Prostate gland (tissue), 2 donors: ENCODE measurements at regions of chr6 and their contacts with region 1.

Region 1: DNA sequence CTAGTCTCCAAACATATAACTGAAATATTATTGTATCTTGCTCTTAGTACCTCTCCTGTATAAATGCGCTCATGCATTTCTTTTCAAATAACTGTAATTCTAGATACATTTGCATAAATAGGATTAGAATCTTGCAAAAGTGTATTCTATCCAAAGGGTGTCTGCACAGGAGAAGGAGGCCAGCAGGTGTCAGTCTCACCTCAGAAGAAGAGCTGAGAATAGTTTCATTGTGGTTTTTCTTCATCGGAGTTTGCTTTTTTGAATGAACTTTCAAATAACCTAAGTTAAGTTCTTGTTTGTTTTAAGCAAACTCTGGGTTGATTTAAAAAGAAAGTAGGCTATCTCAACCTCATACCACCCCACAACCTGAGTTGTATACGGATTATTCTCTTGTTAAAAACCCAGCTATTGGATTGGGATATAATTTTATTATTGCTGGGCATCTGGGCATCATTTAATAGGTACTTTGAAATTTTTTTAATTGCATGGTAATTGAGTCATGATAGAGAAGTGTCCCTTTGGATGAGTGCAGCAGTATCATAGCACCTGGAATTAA is 125.0 kb upstream of the MLIP start:
- DNase-seq: peak; percentile 18
- H3K4me3 ChIP-seq: no peak overlapping the region
- H3K27ac ChIP-seq: no peak overlapping the region
- H3K4me1 ChIP-seq: no peaks in the 10 kb centered on the region
- H3K27me3 ChIP-seq: no peaks in the 10 kb centered on the region
- CTCF ChIP-seq: peak in 3 of 4 experiments; percentile 61 to 65 (median 63)
- POLR2A ChIP-seq: no peak

Region 2: GRCh38 chr6:53926525-53926924 is 59.7 kb before region 1 on chr6:
- intact Hi-C with region 1: no loop called
- DNase-seq: no peak
- H3K4me3 ChIP-seq: no peak overlapping the region
- H3K27ac ChIP-seq: no peak overlapping the region
- H3K4me1 ChIP-seq: no peaks in the 10 kb centered on the region
- H3K27me3 ChIP-seq: no peaks in the 10 kb centered on the region
- CTCF ChIP-seq: no peak
- POLR2A ChIP-seq: no peak

Region 3: DNA sequence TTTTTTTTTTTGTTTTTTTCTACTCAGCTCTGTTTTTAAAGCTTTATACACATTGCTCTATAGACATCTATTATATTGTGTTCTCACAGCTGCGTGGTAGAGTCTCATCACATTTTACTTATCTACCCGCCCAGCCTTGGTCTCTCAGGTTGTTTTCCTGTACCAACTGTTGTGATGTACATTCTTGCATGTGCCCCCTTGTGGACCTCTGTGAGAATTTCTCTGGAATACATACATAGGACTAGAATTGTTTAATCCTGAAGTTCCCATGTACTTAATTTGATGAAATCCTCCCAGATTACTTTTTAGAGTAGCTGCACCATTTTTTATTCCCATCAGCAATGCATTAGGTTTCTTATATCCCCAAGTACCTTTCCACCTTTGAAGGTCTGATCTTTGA is 281.6 kb after region 1 on chr6:
- intact Hi-C with region 1: loop called (anchors 5 kb)
- DNase-seq: peak; percentile 32
- H3K4me3 ChIP-seq: no peak overlapping the region
- H3K27ac ChIP-seq: no peak overlapping the region
- H3K4me1 ChIP-seq: no peaks in the 10 kb centered on the region
- H3K27me3 ChIP-seq: no peaks in the 10 kb centered on the region
- CTCF ChIP-seq: peak in 3 of 4 experiments; percentile 30 to 45 (median 36)
- POLR2A ChIP-seq: no peak

Region 4: DNA sequence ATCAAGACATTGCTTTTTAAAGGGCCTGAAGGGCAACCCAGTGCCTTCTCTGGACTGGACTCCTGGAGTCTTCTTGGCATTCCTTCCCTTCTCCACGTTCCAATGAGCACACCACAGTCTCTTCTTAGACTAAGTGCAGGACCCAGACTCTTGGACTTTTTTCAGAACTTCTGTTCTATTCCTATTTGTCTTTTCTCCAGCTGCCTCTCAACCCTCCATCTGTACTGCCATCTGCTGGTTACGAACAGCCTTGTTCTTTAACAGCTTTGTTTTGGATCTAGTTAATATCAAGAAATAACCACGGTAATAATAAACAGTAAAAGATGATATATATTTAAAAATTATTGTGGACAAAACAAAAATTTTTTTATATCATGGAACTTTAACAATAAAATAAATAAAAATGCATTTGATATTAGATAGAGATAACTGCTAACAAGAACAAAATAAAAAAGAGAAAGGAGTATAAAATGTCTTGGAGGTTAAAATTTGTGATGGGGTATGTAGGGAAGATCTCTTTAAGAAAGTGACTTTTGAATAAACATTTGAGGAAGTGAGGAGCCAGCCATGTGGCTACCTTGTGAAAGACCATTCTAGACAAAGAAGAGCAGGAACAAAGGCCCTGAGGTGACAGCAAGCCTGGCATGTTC is 1083.0 kb after region 1 on chr6:
- intact Hi-C with region 1: loop called (anchors 5 kb)
- DNase-seq: peak; percentile 19
- H3K4me3 ChIP-seq: no peak overlapping the region
- H3K27ac ChIP-seq: no peak overlapping the region
- H3K4me1 ChIP-seq: no peaks in the 10 kb centered on the region
- H3K27me3 ChIP-seq: no peaks in the 10 kb centered on the region
- CTCF ChIP-seq: peak; percentile 10 to 61 (median 40)
- POLR2A ChIP-seq: no peak